ENCODE measurements at regions of chr10 and their contacts with region 1.

Region 1: DNA sequence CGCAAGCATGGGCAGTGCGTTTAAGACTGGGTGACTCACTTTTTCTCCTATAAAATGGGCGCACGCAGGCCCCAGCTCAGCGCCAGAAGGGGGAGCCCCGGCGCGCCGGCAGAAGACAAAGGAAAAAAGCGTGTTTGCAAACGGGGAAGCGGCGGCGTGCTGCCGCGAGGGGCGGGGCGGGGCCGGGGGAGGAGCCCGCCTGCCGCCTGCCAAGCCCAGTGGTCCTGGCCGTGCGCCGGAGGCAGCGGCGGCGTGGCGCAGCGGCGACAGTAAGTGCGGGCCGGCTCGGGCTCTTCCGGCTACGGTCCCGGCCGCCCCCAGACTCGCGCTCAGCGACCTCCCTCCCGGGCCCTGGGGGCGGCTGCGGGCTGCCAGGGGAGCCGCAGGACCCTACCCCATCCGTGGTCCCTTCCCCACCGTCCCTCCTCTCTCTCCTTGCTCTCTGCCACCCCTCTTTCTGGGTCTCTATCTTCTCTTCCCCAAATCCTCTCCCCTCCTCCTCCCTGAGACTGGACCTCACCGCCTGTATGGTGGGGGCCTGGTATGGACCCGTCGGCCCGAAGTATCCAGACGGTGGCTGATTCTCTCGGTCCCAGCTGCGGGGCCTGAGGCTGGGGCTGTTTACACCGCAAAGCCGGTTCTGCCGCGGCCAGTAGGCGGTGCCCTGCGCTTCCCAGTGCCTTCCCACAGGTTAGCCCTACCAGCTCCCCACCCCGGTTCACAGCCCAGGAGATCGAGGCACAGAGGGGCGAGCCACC is at the start of gene SLC29A3:
- DNase-seq: peak; percentile 31
- H3K4me3 ChIP-seq: peak within 1 kb of the TSS; percentile 54 to 89 (median 66)
- H3K27ac ChIP-seq: peak within 1 kb of the TSS; percentile 73 to 92 (median 84)
- H3K4me1 ChIP-seq: peaks cover 10 to 31% (median 15%) of the 10 kb centered on the region in 3 donors
- H3K27me3 ChIP-seq: peaks cover 0 to 6% (median 0%) of the 10 kb centered on the region in 4 donors
- CTCF ChIP-seq: peak; percentile 51 to 68 (median 61)
- POLR2A ChIP-seq: peak in 2 of 4 donors; percentile 76 to 81
- total RNA-seq, gene SLC29A3: 0.87 to 3.1 (median 2.3) TPM

Region 2: DNA sequence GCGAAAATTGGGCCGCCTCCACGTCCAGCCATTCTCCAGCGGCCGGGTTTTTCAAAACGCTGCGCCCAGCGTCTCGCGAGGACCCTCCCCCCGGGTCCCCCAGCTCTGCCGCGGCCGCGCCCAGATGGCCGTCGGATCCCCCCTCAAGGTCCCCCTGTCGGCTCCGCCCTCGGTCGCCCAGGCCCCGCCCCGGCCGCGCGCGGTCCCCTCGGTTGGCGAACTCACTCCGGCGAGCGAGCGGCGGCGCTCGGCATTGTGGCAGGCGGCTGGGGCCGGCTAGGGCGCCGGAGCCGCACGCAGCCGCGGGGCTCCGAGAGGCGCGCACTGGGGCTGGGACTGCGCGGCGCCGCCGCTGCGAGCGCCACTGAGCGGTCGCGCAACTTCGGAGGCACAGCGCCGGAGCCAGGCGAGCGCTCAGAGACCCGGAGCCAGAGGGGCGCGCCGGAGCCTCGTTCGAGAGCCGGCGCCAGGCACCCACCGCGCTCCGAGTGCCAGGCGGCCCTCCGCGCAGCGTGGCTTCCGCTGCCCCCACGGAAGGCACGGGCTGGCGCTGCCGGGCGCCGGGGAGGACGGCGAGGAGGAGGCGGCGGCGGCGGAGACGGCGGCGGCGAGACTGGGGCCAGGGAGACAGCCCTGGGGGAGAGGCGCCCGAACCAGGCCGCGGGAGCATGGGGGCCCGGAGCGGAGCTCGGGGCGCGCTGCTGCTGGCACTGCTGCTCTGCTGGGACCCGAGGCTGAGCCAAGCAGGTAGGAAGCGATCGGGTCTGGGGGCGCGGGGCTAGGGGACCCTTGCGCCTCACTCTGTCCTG is 106.7 kb before region 1 on chr10 and contains the start of gene UNC5B:
- intact Hi-C with region 1: no loop called
- DNase-seq: no peak
- H3K4me3 ChIP-seq: peak within 1 kb of the TSS; percentile 67 to 94 (median 81)
- H3K27ac ChIP-seq: peak within 1 kb of the TSS; percentile 89 to 95 (median 92)
- H3K4me1 ChIP-seq: peaks cover 12 to 64% (median 19%) of the 10 kb centered on the region in 3 donors
- H3K27me3 ChIP-seq: peaks cover 0 to 32% (median 3%) of the 10 kb centered on the region in 4 donors
- CTCF ChIP-seq: peak in 5 of 6 experiments; percentile 11 to 70 (median 54)
- POLR2A ChIP-seq: peak in 3 of 4 donors; percentile 59 to 93 (median 90)
- total RNA-seq, gene UNC5B: 18.9 to 48.1 (median 28.4) TPM

Region 3: GRCh38 chr10:71383972-71384687 is 64.9 kb after region 1 on chr10:
- intact Hi-C with region 1: loop called (anchors 10 kb)
- DNase-seq: no peak
- H3K4me3 ChIP-seq: no peak overlapping the region
- H3K27ac ChIP-seq: no peak overlapping the region
- H3K4me1 ChIP-seq: no peaks in the 10 kb centered on the region
- H3K27me3 ChIP-seq: no peaks in the 10 kb centered on the region
- CTCF ChIP-seq: peak; percentile 78 to 95 (median 88)
- POLR2A ChIP-seq: no peak

Region 4: DNA sequence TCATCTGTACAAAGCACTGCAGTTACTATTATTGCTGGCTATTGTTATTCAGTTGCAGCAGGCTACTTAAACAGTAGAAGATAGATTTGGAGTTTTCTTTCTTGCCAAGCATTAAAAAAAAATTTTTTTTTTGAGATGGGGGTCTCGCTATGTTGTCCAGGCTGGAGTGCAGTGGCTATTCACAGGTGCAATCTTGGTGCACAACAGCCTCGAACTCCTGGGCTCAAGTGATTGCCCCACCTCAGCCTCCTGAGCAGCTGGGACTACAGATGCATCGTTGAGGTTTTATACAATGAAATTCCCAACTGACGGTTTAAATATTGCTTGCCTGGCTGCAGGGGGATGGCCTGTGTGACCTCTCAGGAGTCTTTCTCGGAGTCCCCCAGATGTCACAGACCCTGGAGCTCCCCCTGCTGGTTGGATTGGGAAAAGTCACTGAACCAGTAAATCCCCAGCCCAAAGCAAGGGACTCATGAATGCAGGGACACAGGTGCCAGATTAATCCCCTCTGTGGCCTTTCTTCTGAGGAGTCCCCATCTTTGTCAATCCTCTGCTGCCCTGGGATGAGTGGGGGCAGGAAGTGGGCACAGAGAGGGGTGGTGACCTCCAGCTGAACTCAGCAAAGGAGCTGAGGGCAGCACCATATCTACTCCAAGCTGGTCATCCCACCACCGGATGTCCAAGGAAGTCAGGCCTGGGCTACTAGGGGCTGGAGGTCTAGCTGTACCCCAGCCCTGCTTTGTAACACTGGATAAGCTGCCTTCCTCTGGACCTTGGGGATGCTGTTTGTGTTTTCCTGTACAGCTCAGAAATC is 250.8 kb after region 1 on chr10:
- intact Hi-C with region 1: loop called (anchors 5 kb)
- DNase-seq: no peak
- H3K4me3 ChIP-seq: no peak overlapping the region
- H3K27ac ChIP-seq: no peak overlapping the region
- H3K4me1 ChIP-seq: peaks cover 0 to 4% (median 0%) of the 10 kb centered on the region in 3 donors
- H3K27me3 ChIP-seq: no peaks in the 10 kb centered on the region
- CTCF ChIP-seq: peak; percentile 71 to 88 (median 83)
- POLR2A ChIP-seq: no peak

Region 5: GRCh38 chr10:71708301-71708703 is 389.1 kb after region 1 on chr10:
- intact Hi-C with region 1: loop called (anchors 10 kb)
- DNase-seq: no peak
- H3K4me3 ChIP-seq: no peak overlapping the region
- H3K27ac ChIP-seq: no peak overlapping the region
- H3K4me1 ChIP-seq: peaks cover 12 to 34% (median 17%) of the 10 kb centered on the region in 3 donors
- H3K27me3 ChIP-seq: no peaks in the 10 kb centered on the region
- CTCF ChIP-seq: peak; percentile 70 to 86 (median 80)
- POLR2A ChIP-seq: no peak

Region 6: DNA sequence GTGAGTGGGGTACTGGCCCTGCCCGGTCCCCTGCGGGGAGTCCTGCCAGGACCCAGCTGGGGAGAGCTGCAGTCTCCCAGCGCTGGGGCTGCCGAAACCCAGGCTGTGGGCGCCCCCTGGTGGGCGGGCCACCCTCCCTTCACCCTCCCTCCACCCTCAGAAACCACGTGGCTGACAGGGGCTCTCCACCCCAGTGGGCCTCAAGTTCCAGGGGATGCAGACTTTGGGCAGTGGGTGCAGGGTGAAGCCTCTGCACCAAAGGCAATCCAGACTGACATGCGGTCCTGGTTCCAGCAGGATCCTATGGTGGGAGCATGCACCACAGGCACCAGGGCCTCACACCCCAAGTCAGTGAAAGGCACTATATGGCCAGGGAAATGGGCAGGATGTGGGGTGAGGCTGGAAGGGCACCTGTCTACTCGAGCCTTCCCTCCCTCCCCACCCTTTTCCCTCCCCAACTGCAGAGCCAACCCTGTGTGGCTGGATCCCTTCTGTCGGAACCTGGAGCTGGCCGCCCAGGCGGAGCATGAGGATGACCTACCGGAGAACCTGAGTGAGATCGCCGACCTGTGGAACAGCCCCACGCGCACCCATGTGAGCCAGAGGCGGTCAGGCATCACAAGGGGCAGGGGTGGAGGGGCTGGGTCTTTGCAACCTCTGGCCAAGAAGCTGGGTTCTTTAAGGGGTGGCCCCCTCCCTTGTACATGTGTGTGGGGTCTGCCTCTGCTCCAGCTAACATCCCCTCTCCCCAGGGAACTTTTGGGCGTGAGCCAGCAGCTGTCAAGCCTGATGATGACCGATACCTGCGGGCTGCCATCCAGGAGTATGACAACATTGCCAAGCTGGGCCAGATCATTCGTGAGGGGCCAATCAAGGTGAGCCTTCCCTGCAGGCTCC is 493.0 kb after region 1 on chr10:
- intact Hi-C with region 1: loop called (anchors 10 kb)
- DNase-seq: no peak
- H3K4me3 ChIP-seq: no peak overlapping the region
- H3K27ac ChIP-seq: no peak overlapping the region
- H3K4me1 ChIP-seq: peaks cover 0 to 15% (median 0%) of the 10 kb centered on the region in 3 donors
- H3K27me3 ChIP-seq: no peaks in the 10 kb centered on the region
- CTCF ChIP-seq: peak; percentile 56 to 95 (median 92)
- POLR2A ChIP-seq: no peak

Measured in esophagus squamous epithelium (tissue), 5 donors.